ENCODE measurements at regions of chr6 and their contacts with region 1.

Region 1: GRCh38 chr6:134230087-134230700 is 87.7 kb downstream of the SGK1 start:
- DNase-seq: peak in 3 of 35 experiments; percentile 2 to 24 (median 6)
- ATAC-seq: no peak
- H3K4me3 ChIP-seq: no peak overlapping the region
- H3K4me3 Mint-ChIP-seq: peak overlapping the region in 1 of 3 donors; percentile 16
- H3K27ac ChIP-seq: no peak overlapping the region
- H3K27ac Mint-ChIP-seq: no peak overlapping the region
- H3K4me1 ChIP-seq: peaks cover 0 to 3% of the 10 kb centered on the region in 2 experiments
- H3K4me1 Mint-ChIP-seq: peaks cover 8 to 21% (median 10%) of the 10 kb centered on the region in 3 donors
- H3K27me3 ChIP-seq: no peaks in the 10 kb centered on the region
- H3K27me3 Mint-ChIP-seq: no peaks in the 10 kb centered on the region

Region 2: GRCh38 chr6:132734694-132735635 is 1495.2 kb before region 1 on chr6:
- CTCF ChIA-PET with region 1: no interaction called
- POLR2A ChIA-PET with region 1: no interaction called
- DNase-seq: no peak
- ATAC-seq: no peak
- H3K4me3 ChIP-seq: no peak overlapping the region
- H3K4me3 Mint-ChIP-seq: no peak overlapping the region
- H3K27ac ChIP-seq: no peak overlapping the region
- H3K27ac Mint-ChIP-seq: no peak overlapping the region
- H3K4me1 ChIP-seq: peaks cover 0 to 2% of the 10 kb centered on the region in 2 experiments
- H3K4me1 Mint-ChIP-seq: peaks cover 7 to 13% (median 10%) of the 10 kb centered on the region in 3 donors
- H3K27me3 ChIP-seq: no peaks in the 10 kb centered on the region
- H3K27me3 Mint-ChIP-seq: peaks cover 0 to 10% of the 10 kb centered on the region in 2 donors

Region 3: DNA sequence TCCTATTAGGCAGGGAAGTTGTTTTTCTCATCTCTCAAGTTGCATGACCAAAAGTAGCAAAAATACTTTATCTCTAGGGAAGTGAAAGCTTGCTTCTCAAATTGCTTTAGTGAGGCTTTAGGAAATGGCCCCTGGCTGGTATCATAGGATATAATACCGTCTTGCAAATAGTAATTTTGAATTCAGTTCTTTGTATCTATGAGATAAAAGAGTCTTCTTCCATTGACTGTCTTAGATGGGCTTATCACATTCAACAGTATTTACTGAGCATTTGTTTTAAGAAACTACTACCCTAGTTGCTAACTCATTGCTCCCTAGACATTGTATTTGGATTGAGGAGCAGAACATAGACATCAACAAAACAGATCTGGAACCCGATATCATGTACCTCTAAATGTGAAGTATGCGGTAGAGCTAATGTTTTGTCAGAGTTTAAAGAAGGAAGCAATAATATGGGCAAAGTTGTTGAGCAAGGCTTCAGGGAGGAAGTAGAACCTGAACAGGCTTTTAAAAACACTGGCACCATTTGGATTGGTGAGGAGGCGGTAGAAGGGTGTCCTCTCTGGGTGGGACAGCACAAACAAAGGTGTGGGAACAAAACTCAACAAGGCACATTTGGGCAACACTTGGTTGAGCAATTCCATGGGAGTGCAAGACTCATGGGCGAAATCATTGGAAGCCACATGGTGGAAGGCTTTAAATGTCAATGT is 13.7 kb before region 1 on chr6:
- CTCF ChIA-PET with region 1: interaction called in 1 of 2 experiments, 5 read pairs
- POLR2A ChIA-PET with region 1: interaction called in 1 of 2 experiments, 16 read pairs
- DNase-seq: no peak
- ATAC-seq: no peak
- H3K4me3 ChIP-seq: no peak overlapping the region
- H3K4me3 Mint-ChIP-seq: no peak overlapping the region
- H3K27ac ChIP-seq: no peak overlapping the region
- H3K27ac Mint-ChIP-seq: peak overlapping the region; percentile 24 to 25
- H3K4me1 ChIP-seq: no peaks in the 10 kb centered on the region
- H3K4me1 Mint-ChIP-seq: peaks cover 12 to 17% (median 12%) of the 10 kb centered on the region in 3 donors
- H3K27me3 ChIP-seq: no peaks in the 10 kb centered on the region
- H3K27me3 Mint-ChIP-seq: no peaks in the 10 kb centered on the region

Region 4: GRCh38 chr6:134240665-134241355 is 10.6 kb after region 1 on chr6:
- CTCF ChIA-PET with region 1: no interaction called
- POLR2A ChIA-PET with region 1: interaction called in 1 of 2 experiments, 15 read pairs
- DNase-seq: peak; percentile 58 to 96 (median 90)
- ATAC-seq: peak; percentile 86 to 98 (median 92)
- H3K4me3 ChIP-seq: no peak overlapping the region
- H3K4me3 Mint-ChIP-seq: peak overlapping the region in 2 of 3 donors; percentile 38 to 52
- H3K27ac ChIP-seq: peak overlapping the region; percentile 93
- H3K27ac Mint-ChIP-seq: peak overlapping the region; percentile 91 to 96
- H3K4me1 ChIP-seq: peaks cover 32 to 35% of the 10 kb centered on the region in 2 experiments
- H3K4me1 Mint-ChIP-seq: peaks cover 53 to 63% (median 58%) of the 10 kb centered on the region in 3 donors
- H3K27me3 ChIP-seq: no peaks in the 10 kb centered on the region
- H3K27me3 Mint-ChIP-seq: no peaks in the 10 kb centered on the region